T-cell (primary cell): ENCODE measurements at regions of chr5 and their contacts with region 1.

Region 1: DNA sequence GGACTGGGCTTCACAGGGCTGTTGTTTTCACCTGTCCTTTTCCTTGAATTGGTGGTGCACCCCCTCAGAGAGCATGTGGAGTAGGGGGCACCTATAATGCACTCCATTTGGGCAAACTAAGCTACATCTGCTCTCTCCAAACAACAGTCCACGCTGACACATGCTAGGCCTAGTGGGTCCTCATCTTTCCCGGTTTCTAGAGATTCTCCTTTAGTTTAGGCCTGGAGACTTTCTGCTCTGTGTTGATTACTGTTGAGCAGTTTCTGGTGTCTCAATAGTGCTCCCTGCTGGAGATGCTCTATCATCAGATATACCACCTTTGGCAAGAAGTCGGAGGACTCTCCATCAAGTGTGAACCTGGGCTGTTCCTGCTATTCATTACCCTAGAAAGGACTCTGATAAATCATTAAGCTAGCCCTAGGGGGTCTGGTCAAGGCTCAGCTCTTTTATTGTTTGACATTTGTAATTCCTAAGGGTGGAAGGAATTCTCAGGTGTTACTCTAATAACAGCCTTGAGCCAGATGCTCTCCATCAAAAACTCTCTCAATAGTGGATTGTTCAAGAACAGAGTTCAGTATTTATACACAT is 64.0 kb upstream of the FYB1 start:
- DNase-seq: peak in 34 of 35 experiments; percentile 6 to 90 (median 56)
- ATAC-seq: peak; percentile 95 to 100 (median 100)
- H3K4me3 ChIP-seq: no peak overlapping the region
- H3K4me3 Mint-ChIP-seq: peak overlapping the region in 1 of 3 donors; percentile 21
- H3K27ac ChIP-seq: no peak overlapping the region
- H3K27ac Mint-ChIP-seq: peak overlapping the region; percentile 68 to 78
- H3K4me1 ChIP-seq: peaks cover 4 to 6% of the 10 kb centered on the region in 2 experiments
- H3K4me1 Mint-ChIP-seq: peaks cover 38 to 46% (median 39%) of the 10 kb centered on the region in 3 donors
- H3K27me3 ChIP-seq: no peaks in the 10 kb centered on the region
- H3K27me3 Mint-ChIP-seq: peaks cover 0 to 5% of the 10 kb centered on the region in 2 donors

Region 2: GRCh38 chr5:39143151-39143860 is 140.0 kb before region 1 on chr5:
- CTCF ChIA-PET with region 1: interaction called, 14 to 32 read pairs
- POLR2A ChIA-PET with region 1: interaction called in 1 of 2 experiments, 7 read pairs
- DNase-seq: no peak
- ATAC-seq: no peak
- H3K4me3 ChIP-seq: no peak overlapping the region
- H3K4me3 Mint-ChIP-seq: no peak overlapping the region
- H3K27ac ChIP-seq: no peak overlapping the region
- H3K27ac Mint-ChIP-seq: no peak overlapping the region
- H3K4me1 ChIP-seq: peaks cover 11 to 22% of the 10 kb centered on the region in 2 experiments
- H3K4me1 Mint-ChIP-seq: peaks cover 35 to 44% (median 36%) of the 10 kb centered on the region in 3 donors
- H3K27me3 ChIP-seq: no peaks in the 10 kb centered on the region
- H3K27me3 Mint-ChIP-seq: no peaks in the 10 kb centered on the region

Region 3: DNA sequence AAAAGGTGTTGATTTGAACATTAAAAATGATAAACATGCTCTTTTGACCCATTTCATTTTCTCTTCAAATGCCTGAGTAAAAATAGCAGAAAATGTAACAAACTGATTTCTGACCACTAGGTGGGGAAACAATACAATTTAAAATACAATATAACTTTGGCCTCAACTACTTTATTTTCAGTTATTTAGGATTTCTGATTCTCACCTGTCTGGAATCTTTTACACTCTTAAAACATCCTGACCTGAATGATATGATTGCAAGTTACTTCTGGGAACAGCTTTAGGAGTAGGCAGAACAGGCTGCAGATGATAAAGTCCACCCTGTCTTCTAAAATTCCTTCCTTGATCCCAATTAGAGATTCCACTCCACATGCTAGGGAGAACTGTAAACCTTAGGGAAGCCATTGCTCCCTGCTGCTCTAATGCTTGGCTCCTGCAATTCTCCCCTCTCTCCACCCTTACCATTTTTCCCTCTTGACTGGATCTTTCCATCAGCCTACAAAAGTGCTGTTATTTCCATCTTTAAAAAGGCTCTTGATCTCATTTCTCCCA is 134.3 kb before region 1 on chr5:
- CTCF ChIA-PET with region 1: interaction called, 14 to 32 read pairs
- POLR2A ChIA-PET with region 1: interaction called in 1 of 2 experiments, 7 read pairs
- DNase-seq: peak in 1 of 35 experiments; percentile 73
- ATAC-seq: peak; percentile 22 to 66 (median 47)
- H3K4me3 ChIP-seq: no peak overlapping the region
- H3K4me3 Mint-ChIP-seq: peak overlapping the region in 1 of 3 donors; percentile 51
- H3K27ac ChIP-seq: peak overlapping the region; percentile 49
- H3K27ac Mint-ChIP-seq: peak overlapping the region; percentile 90 to 94
- H3K4me1 ChIP-seq: peaks cover 46% of the 10 kb centered on the region in 2 experiments
- H3K4me1 Mint-ChIP-seq: peaks cover 78 to 84% (median 79%) of the 10 kb centered on the region in 3 donors
- H3K27me3 ChIP-seq: no peaks in the 10 kb centered on the region
- H3K27me3 Mint-ChIP-seq: no peaks in the 10 kb centered on the region

Region 4: DNA sequence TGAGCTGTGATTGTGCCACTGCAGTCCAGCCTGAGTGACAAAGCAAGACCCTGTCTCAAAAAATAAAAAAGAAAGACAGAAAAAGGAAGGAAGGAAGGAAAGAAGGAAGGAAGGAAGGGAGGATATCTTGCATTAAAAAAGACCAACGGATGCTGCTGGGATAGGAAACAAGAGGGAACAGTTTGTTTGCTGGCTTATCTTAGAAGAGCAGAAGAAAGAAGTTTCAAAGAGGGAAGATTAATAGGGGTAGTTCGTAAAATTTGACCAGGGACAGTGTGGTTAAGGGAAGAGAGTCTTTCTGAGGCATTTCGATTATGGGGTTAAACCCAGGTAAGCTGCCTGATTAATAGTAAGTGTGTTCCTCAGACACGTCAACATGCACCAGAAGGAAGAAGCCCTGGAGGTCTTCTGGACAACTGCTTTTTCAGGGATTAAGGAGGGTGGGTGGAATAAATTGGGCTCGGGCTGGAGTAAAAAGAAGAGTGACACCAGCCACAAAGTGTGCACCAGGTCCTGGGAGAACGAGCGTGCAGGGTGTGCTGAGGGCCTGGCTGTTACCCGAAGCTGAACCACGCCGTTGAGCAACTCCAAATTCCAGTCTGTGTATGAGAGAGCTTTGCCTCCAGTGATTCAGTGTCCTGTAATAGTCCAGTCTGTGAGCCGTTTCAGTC is 88.7 kb before region 1 on chr5:
- CTCF ChIA-PET with region 1: interaction called, 12 to 16 read pairs
- POLR2A ChIA-PET with region 1: interaction called in 1 of 2 experiments, 3 read pairs
- DNase-seq: no peak
- ATAC-seq: no peak
- H3K4me3 ChIP-seq: peak overlapping the region; percentile 74 to 78
- H3K4me3 Mint-ChIP-seq: peak overlapping the region; percentile 74 to 95 (median 74)
- H3K27ac ChIP-seq: peak overlapping the region; percentile 72
- H3K27ac Mint-ChIP-seq: peak overlapping the region; percentile 94 to 98
- H3K4me1 ChIP-seq: peaks cover 48 to 65% of the 10 kb centered on the region in 2 experiments
- H3K4me1 Mint-ChIP-seq: peaks cover 72 to 76% (median 75%) of the 10 kb centered on the region in 3 donors
- H3K27me3 ChIP-seq: no peaks in the 10 kb centered on the region
- H3K27me3 Mint-ChIP-seq: no peaks in the 10 kb centered on the region

Region 5: GRCh38 chr5:39202597-39203274 is 80.6 kb before region 1 on chr5:
- CTCF ChIA-PET with region 1: interaction called, 16 to 23 read pairs
- POLR2A ChIA-PET with region 1: interaction called in 1 of 2 experiments, 3 read pairs
- DNase-seq: peak in 14 of 35 experiments; percentile 31 to 70 (median 42)
- ATAC-seq: peak; percentile 59 to 74 (median 61)
- H3K4me3 ChIP-seq: peak overlapping the region; percentile 78 to 93
- H3K4me3 Mint-ChIP-seq: peak overlapping the region; percentile 92 to 95 (median 95)
- H3K27ac ChIP-seq: peak overlapping the region; percentile 87
- H3K27ac Mint-ChIP-seq: peak overlapping the region; percentile 96 to 98
- H3K4me1 ChIP-seq: peaks cover 29 to 42% of the 10 kb centered on the region in 2 experiments
- H3K4me1 Mint-ChIP-seq: peaks cover 46 to 48% (median 47%) of the 10 kb centered on the region in 3 donors
- H3K27me3 ChIP-seq: no peaks in the 10 kb centered on the region
- H3K27me3 Mint-ChIP-seq: no peaks in the 10 kb centered on the region

Region 6: DNA sequence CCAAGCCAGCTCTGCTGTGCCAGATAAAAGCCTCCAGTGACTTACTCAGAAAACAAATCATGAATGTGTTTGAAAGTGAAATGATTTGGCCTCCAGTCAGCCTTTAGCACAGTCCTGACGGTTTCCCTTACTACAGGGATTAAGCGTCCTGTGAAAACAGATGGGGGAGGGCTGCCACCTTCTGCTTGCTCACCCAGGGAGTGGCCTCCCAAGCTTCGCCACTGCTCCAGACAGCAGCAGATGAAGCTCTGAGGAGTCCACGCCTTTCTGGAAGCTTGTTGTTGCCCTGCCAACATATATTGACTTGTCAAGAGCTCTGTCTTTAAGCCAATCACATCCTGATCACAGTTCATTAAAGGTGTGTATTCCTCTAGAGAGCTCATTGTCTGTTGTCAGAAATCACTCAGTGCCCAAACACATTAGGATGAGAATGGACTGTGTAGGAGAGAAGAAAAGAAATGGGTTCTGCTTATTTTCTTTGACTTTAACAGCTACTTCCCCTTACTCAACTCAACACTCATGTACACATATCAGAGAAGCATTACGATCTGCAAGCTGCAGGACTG is 59.0 kb before region 1 on chr5:
- CTCF ChIA-PET with region 1: interaction called, 19 to 84 read pairs
- POLR2A ChIA-PET with region 1: no interaction called
- DNase-seq: no peak
- ATAC-seq: peak in 1 of 4 experiments; percentile 44
- H3K4me3 ChIP-seq: no peak overlapping the region
- H3K4me3 Mint-ChIP-seq: no peak overlapping the region
- H3K27ac ChIP-seq: no peak overlapping the region
- H3K27ac Mint-ChIP-seq: peak overlapping the region in 1 of 2 donors; percentile 44
- H3K4me1 ChIP-seq: peaks cover 10 to 11% of the 10 kb centered on the region in 2 experiments
- H3K4me1 Mint-ChIP-seq: peaks cover 33 to 47% (median 44%) of the 10 kb centered on the region in 3 donors
- H3K27me3 ChIP-seq: no peaks in the 10 kb centered on the region
- H3K27me3 Mint-ChIP-seq: no peaks in the 10 kb centered on the region

Region 7: DNA sequence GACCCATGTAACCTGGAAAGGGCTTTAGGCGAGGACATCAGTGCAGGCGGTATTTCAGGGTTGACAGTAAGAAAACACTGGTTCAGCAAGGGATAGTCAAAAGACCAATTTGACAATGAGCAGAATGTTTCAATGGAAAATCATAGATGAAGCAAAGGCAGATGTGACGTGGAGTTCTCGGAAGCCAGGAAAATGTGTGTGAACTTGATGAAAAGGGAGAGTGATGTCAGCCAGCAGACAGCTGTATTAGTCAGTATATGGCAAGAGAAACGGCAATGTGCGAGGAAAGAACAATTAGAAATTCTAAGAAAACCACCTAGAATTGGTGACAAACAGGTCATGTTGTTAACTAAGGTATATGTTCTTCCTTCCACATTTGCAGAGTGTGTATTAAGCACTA is 645.4 kb after region 1 on chr5:
- CTCF ChIA-PET with region 1: no interaction called
- POLR2A ChIA-PET with region 1: no interaction called
- DNase-seq: no peak
- ATAC-seq: no peak
- H3K4me3 ChIP-seq: no peak overlapping the region
- H3K4me3 Mint-ChIP-seq: no peak overlapping the region
- H3K27ac ChIP-seq: no peak overlapping the region
- H3K27ac Mint-ChIP-seq: no peak overlapping the region
- H3K4me1 ChIP-seq: no peaks in the 10 kb centered on the region
- H3K4me1 Mint-ChIP-seq: no peaks in the 10 kb centered on the region
- H3K27me3 ChIP-seq: peaks cover 0 to 4% of the 10 kb centered on the region in 2 experiments
- H3K27me3 Mint-ChIP-seq: peaks cover 21 to 33% of the 10 kb centered on the region in 2 donors